Activated B cell treated with CpG ODN at 0.5 μM for 24 hours (primary cell): ENCODE measurements at regions of chr2 and their contacts with region 1.

Region 1: GRCh38 chr2:39099870-39100728 is 20.8 kb downstream of the SOS1 start:
- DNase-seq: no peak
- ATAC-seq: peak; percentile 40
- H3K4me3 Mint-ChIP-seq: peak overlapping the region; percentile 52
- H3K27ac Mint-ChIP-seq: peak overlapping the region; percentile 36
- H3K4me1 Mint-ChIP-seq: peaks cover 65% of the 10 kb centered on the region
- H3K27me3 Mint-ChIP-seq: no peaks in the 10 kb centered on the region
- CTCF ChIP-seq: no peak

Region 2: GRCh38 chr2:37526321-37526720 is 1573.8 kb before region 1 on chr2:
- CTCF ChIA-PET with region 1: no interaction called
- POLR2A ChIA-PET with region 1: no interaction called
- intact Hi-C with region 1: no loop called
- DNase-seq: no peak
- ATAC-seq: no peak
- H3K4me3 Mint-ChIP-seq: no peak overlapping the region
- H3K27ac Mint-ChIP-seq: no peak overlapping the region
- H3K4me1 Mint-ChIP-seq: peaks cover 11% of the 10 kb centered on the region
- H3K27me3 Mint-ChIP-seq: no peaks in the 10 kb centered on the region
- CTCF ChIP-seq: no peak

Region 3: GRCh38 chr2:39141331-39142271 is 41.5 kb after region 1 on chr2:
- CTCF ChIA-PET with region 1: no interaction called
- POLR2A ChIA-PET with region 1: interaction called, 6 read pairs
- intact Hi-C with region 1: loop called (anchors 1 kb)
- DNase-seq: no peak
- ATAC-seq: peak; percentile 86
- H3K4me3 Mint-ChIP-seq: peak overlapping the region; percentile 72
- H3K27ac Mint-ChIP-seq: peak overlapping the region; percentile 91
- H3K4me1 Mint-ChIP-seq: peaks cover 50% of the 10 kb centered on the region
- H3K27me3 Mint-ChIP-seq: no peaks in the 10 kb centered on the region
- CTCF ChIP-seq: no peak